ENCODE measurements at regions of chr17 and their contacts with region 1.

Region 1: GRCh38 chr17:39699818-39700147 is at the start of gene ERBB2:
- DNase-seq: peak; percentile 66
- H3K4me3 ChIP-seq: peak within 1 kb of the TSS; percentile 70
- H3K27ac ChIP-seq: peak within 1 kb of the TSS; percentile 61
- H3K4me1 ChIP-seq: no peaks in the 10 kb centered on the region
- H3K27me3 ChIP-seq: no peaks in the 10 kb centered on the region
- CTCF ChIP-seq: no peak
- total RNA-seq, gene ERBB2: 11.1 and 17.8 TPM in 2 replicates

Region 2: DNA sequence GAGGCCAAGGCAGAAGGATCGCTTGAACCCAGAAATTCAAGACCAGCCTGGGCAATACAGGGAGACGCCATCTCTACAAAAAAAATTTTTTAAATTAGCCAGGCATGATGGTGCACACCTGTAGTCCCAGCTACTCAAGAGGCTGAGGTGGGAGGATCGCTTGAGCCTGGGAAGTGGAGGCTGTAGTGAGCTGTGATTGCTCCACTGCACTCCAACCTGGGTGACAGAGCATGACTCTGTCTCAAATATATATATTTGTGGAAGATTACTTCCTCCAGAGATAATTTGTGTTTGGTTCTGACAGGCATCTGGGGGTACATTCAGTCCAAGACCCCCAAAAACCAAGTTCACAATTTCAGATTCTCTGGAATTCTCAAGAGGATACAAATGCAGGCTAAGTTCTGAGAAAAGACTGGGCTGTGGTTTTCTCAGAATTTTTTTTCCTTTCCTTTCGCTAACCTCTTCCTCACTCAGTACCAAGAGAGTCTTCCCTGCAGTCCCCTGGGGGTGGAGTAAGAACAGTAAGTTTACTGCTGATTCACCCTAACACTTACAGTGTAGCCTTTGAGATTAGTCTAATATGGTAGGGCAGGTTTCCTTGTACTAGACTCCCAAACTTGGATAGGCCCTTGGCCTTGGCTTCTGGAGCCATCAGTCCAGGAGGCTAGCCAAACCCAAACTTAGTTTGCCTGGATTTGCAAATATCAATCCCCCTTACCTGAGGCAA is 203.5 kb after region 1 on chr17:
- CTCF ChIA-PET with region 1: no interaction called
- POLR2A ChIA-PET with region 1: interaction called, 10 read pairs
- intact Hi-C with region 1: no loop called
- DNase-seq: no peak
- H3K4me3 ChIP-seq: no peak overlapping the region
- H3K27ac ChIP-seq: no peak overlapping the region
- H3K4me1 ChIP-seq: no peaks in the 10 kb centered on the region
- H3K27me3 ChIP-seq: no peaks in the 10 kb centered on the region
- CTCF ChIP-seq: no peak

Measured in A673 (cell line).